Transverse colon (tissue), 4 donors: ENCODE measurements at regions of chr1 and their contacts with region 1.

Region 1: GRCh38 chr1:234823191-234824176 is 213.5 kb upstream of the IRF2BP2 start:
- DNase-seq: peak; percentile 87
- H3K4me3 ChIP-seq: no peak overlapping the region
- H3K27ac ChIP-seq: peak overlapping the region; percentile 73 to 87 (median 81)
- H3K4me1 ChIP-seq: peaks cover 11 to 53% (median 30%) of the 10 kb centered on the region in 4 donors
- H3K27me3 ChIP-seq: no peaks in the 10 kb centered on the region
- CTCF ChIP-seq: no peak
- EP300 ChIP-seq: peak; percentile 82
- POLR2A ChIP-seq: no peak

Region 2: DNA sequence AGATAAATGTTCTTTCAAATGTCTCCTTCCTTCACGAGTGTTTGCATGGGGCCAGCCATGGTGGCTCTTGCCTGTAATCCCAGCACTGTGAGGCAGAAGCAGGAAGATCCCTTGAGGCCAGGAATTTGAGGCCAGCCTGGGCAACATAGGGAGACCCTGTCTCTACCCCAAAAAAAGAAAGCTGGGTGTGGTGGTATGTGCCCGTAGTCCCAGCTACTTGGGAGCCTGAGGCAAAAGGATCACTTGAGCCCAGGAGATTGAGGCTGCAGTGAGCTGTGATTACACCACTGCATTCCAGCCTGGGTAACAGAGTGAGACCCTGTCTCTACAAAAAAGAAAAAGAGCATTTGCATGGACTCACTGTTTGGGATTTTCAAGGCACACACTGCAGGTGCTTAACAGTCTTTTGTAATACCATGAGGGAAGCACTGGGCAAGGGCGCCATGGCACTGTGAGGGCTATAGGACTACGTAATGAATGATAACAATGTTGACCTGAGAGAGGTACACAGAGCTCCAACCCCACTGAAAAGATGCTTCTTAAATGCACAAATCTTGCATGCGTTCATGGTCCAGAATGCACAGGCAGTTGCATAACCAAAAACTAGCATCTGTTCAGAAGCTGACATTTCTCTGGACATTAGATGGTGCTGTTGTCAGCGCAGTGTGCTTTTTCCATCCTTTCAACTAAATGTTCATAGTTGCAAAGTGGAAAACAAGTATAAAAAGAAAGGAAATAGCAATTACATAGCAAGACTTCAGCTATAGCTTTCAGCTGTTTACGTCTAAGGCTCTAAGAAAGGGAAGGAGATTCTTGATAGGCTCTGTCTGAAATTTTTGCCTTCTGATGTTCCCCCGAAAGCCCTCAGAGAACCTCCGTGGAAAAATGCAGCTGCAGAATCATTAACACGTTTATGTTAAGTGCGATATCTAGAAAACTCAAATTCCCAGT is 336.7 kb before region 1 on chr1:
- in situ Hi-C with region 1: no loop called
- intact Hi-C with region 1: no loop called
- DNase-seq: peak; percentile 35
- H3K4me3 ChIP-seq: no peak overlapping the region
- H3K27ac ChIP-seq: peak overlapping the region; percentile 10 to 26 (median 22)
- H3K4me1 ChIP-seq: peaks cover 5 to 17% (median 7%) of the 10 kb centered on the region in 4 donors
- H3K27me3 ChIP-seq: no peaks in the 10 kb centered on the region
- CTCF ChIP-seq: peak; percentile 52 to 63 (median 56)
- EP300 ChIP-seq: no peak
- POLR2A ChIP-seq: no peak

Region 3: DNA sequence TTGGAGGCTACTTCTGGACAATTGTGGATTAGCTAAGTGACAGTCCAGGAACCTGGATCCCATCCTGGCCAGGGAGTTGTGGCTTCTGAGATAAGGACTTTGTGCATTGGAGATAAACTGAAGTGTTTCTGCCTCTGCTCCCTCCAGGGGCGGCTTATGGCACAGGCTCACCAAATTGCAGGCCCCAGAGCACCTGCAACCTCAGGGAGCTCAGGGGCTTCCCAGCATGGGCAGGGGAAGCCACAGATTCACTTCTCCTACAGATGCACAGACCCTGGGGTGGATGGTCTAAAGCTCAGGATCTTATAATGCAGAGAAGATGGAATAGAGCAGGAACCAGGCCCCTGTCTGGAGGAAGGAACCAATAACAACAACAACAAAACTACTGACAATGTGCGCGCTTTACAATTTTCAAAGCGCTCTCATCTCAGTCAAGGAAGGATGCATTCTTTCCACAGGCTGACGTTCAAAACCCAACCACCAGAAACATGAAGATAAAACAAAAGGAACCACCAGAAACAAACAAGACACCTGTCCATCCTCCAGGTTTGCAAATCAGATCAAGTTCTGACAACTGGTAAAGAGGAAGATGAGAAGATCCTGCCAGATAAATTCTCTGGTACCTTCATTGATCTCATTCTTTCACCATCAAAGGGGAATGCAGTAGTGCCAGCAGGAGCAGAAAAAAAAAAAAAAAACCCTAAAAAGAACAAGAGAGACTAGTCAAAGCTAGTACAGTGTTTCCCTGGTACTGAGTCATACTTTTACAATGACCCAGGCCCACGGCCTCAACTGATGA is 92.5 kb before region 1 on chr1:
- in situ Hi-C with region 1: loop called (anchors 10 to 25 kb)
- intact Hi-C with region 1: no loop called
- DNase-seq: no peak
- H3K4me3 ChIP-seq: no peak overlapping the region
- H3K27ac ChIP-seq: peak overlapping the region in 1 of 4 donors; percentile 16
- H3K4me1 ChIP-seq: peaks cover 11 to 26% (median 16%) of the 10 kb centered on the region in 4 donors
- H3K27me3 ChIP-seq: no peaks in the 10 kb centered on the region
- CTCF ChIP-seq: no peak
- EP300 ChIP-seq: no peak
- POLR2A ChIP-seq: no peak

Region 4: GRCh38 chr1:235067263-235068172 is 244.0 kb after region 1 on chr1:
- in situ Hi-C with region 1: no loop called
- intact Hi-C with region 1: loop called (anchors 10 kb)
- DNase-seq: peak; percentile 87
- H3K4me3 ChIP-seq: no peak overlapping the region
- H3K27ac ChIP-seq: peak overlapping the region; percentile 72 to 87 (median 84)
- H3K4me1 ChIP-seq: peaks cover 25 to 54% (median 32%) of the 10 kb centered on the region in 4 donors
- H3K27me3 ChIP-seq: no peaks in the 10 kb centered on the region
- CTCF ChIP-seq: no peak
- EP300 ChIP-seq: no peak
- POLR2A ChIP-seq: peak; percentile 53

Region 5: DNA sequence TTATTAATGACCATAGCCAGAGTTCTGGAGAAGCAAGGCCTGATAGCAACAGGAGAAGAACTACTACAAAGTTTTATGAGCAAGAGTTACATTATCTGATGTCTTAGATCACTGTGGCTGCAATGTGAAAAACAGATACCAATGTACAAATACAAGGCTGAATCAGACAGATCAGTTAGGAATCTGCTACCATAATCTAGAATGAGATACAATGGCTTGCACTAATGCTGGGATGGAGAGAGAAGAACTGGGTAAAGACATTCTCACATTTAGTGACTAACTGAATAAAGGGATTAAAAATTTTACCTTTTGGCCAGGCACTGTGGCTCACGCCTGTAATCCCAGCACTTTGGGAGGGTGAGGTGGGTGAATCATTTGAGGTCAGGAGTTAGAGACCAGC is 463.2 kb after region 1 on chr1:
- in situ Hi-C with region 1: no loop called
- intact Hi-C with region 1: no loop called
- DNase-seq: no peak
- H3K4me3 ChIP-seq: no peak overlapping the region
- H3K27ac ChIP-seq: no peak overlapping the region
- H3K4me1 ChIP-seq: peaks cover 0 to 48% (median 12%) of the 10 kb centered on the region in 4 donors
- H3K27me3 ChIP-seq: no peaks in the 10 kb centered on the region
- CTCF ChIP-seq: no peak
- EP300 ChIP-seq: no peak
- POLR2A ChIP-seq: no peak